ENCODE measurements at regions of chr15 and their contacts with region 1.

Region 1: GRCh38 chr15:91192690-91193377 is 92.8 kb downstream of the SV2B start:
- DNase-seq: no peak
- ATAC-seq: no peak
- H3K4me3 ChIP-seq: no peak overlapping the region
- H3K27ac ChIP-seq: no peak overlapping the region
- H3K4me1 ChIP-seq: no peaks in the 10 kb centered on the region
- H3K27me3 ChIP-seq: no peaks in the 10 kb centered on the region
- CTCF ChIP-seq: no peak

Region 2: GRCh38 chr15:91142114-91142731 is 50.6 kb before region 1 on chr15:
- intact Hi-C with region 1: loop called in 1 of 2 experiments (anchors 10 kb)
- DNase-seq: no peak
- ATAC-seq: no peak
- H3K4me3 ChIP-seq: no peak overlapping the region
- H3K27ac ChIP-seq: no peak overlapping the region
- H3K4me1 ChIP-seq: no peaks in the 10 kb centered on the region
- H3K27me3 ChIP-seq: peaks cover 0 to 4% (median 0%) of the 10 kb centered on the region in 3 donors
- CTCF ChIP-seq: no peak

Region 3: GRCh38 chr15:91548549-91548948 is 355.7 kb after region 1 on chr15:
- intact Hi-C with region 1: no loop called
- DNase-seq: no peak
- ATAC-seq: peak in 1 of 4 donors; percentile 56
- H3K4me3 ChIP-seq: no peak overlapping the region
- H3K27ac ChIP-seq: no peak overlapping the region
- H3K4me1 ChIP-seq: no peaks in the 10 kb centered on the region
- H3K27me3 ChIP-seq: no peaks in the 10 kb centered on the region
- CTCF ChIP-seq: no peak

Measured in psoas muscle (tissue), 8 donors.